Heart left ventricle (tissue), 16 donors: ENCODE measurements at regions of chr1 and their contacts with region 1.

Region 1: GRCh38 chr1:39098546-39099250 is 72.5 kb downstream of the NDUFS5 start:
- DNase-seq: peak in 4 of 5 donors; percentile 45 to 65 (median 46)
- ATAC-seq: peak; percentile 27 to 77 (median 70)
- H3K4me3 ChIP-seq: no peak overlapping the region
- H3K27ac ChIP-seq: no peak overlapping the region
- H3K4me1 ChIP-seq: peaks cover 0 to 28% (median 10%) of the 10 kb centered on the region in 12 donors
- H3K27me3 ChIP-seq: no peaks in the 10 kb centered on the region
- CTCF ChIP-seq: peak; percentile 57 to 82 (median 74)
- POLR2A ChIP-seq: no peak

Region 2: GRCh38 chr1:38873027-38873969 is 225.4 kb before region 1 on chr1 and contains the start of gene MYCBP:
- intact Hi-C with region 1: loop called in 2 of 10 experiments (anchors 10 kb)
- DNase-seq: peak; percentile 96 to 98 (median 97)
- ATAC-seq: peak; percentile 98 to 100 (median 100)
- H3K4me3 ChIP-seq: peak within 1 kb of the TSS; percentile 37 to 96 (median 80)
- H3K27ac ChIP-seq: peak within 1 kb of the TSS; percentile 53 to 80 (median 72)
- H3K4me1 ChIP-seq: peaks cover 0 to 29% (median 21%) of the 10 kb centered on the region in 12 donors
- H3K27me3 ChIP-seq: no peaks in the 10 kb centered on the region
- CTCF ChIP-seq: peak in 5 of 12 donors; percentile 17 to 45 (median 24)
- POLR2A ChIP-seq: peak in 1 of 2 donors; percentile 80
- total RNA-seq, gene MYCBP: 4.8 to 26.2 (median 11.1) TPM

Region 3: GRCh38 chr1:39189592-39190041 is 90.9 kb after region 1 on chr1:
- intact Hi-C with region 1: loop called in 4 of 10 experiments (anchors 1 to 2 kb)
- DNase-seq: no peak
- ATAC-seq: no peak
- H3K4me3 ChIP-seq: no peak overlapping the region
- H3K27ac ChIP-seq: peak overlapping the region in 1 of 12 donors; percentile 91
- H3K4me1 ChIP-seq: peaks cover 0 to 58% (median 23%) of the 10 kb centered on the region in 12 donors
- H3K27me3 ChIP-seq: no peaks in the 10 kb centered on the region
- CTCF ChIP-seq: no peak
- POLR2A ChIP-seq: no peak

Region 4: DNA sequence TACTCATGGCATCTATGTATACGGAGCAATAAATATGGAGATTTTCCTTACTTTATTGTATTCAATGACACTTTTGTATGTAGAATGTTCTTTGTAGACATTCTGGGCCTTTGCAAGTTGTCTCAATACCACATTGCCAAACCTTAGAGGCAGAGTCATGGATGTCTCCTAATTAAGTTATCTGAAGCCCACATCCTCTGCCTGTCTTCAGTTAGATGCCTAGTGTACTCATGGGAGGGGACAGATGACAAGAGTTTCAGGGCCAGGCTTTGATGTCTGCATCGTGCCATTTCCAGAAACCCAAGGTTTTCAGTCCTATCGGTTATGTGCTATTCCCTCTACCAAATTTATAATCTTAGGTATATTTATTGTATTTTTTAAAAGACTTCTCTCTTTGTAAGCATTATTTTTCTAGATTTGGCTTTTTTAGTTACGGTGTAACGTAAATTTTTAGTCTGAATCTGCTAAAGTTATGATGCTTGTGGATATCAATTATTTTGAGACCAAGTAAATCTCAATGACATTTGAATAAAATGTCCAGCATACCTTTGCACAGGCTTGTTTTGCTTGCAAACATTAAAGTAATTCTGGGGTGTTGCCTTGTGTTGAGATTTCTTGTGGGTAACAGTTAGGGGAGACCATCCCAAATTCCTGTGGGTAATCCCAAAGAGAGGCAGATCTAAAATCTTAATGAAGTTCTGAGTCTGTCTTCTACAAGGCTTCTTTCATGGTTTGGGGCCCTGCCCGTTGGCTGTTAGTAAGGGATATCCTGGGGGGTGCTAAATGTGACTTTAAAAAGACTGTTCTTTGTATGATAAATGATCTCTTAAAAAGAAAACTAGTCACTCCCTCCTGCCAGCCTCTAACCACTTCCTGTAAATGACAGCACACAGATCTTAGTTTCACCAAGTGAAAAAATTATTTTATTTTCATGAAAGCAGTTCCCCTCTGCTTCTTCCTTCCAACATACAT is 97.8 kb after region 1 on chr1:
- intact Hi-C with region 1: loop called in 4 of 10 experiments (anchors 1 to 2 kb)
- DNase-seq: no peak
- ATAC-seq: no peak
- H3K4me3 ChIP-seq: peak overlapping the region in 1 of 12 donors; percentile 15
- H3K27ac ChIP-seq: peak overlapping the region in 5 of 12 donors; percentile 21 to 91 (median 41)
- H3K4me1 ChIP-seq: peaks cover 8 to 67% (median 37%) of the 10 kb centered on the region in 12 donors
- H3K27me3 ChIP-seq: no peaks in the 10 kb centered on the region
- CTCF ChIP-seq: no peak
- POLR2A ChIP-seq: no peak

Region 5: DNA sequence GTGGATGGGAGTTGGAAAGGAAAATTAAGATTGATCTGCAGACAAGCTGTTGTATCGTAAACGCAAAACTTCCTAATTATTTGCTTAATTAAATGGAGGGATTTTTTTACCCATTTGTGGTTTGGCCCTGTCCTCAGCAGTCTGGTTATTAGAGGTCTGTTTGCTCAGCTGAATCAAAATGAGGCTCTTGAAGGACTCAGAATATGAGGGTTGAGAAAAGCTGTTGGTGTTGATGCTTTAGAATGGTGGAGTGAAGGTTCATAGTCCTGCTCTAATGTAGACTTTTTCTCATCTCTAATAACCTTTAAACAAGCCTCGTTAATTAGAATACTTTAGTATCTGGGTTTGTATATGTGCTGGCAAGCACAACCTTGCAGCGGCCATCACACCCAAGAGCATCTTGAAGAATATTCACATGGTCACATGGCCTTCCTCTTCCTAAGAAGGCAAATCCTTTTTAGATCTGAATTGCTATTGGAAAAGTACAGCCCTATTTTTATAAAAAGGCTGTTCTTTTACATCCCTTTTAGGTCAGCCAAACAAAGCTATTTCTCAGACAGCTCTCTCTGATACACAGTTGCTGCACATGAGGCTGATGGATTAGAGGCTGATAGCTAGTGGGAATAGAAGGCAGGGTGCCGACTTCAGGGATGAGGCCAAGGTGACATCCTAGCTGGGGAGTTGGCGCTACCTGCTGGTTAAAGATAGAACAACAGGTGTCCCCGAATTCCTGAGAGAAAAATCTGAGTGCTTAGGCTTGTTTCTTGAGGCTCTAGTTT is 159.6 kb after region 1 on chr1:
- intact Hi-C with region 1: loop called in 7 of 10 experiments (anchors 1 to 5 kb)
- DNase-seq: peak in 4 of 5 donors; percentile 58 to 72 (median 69)
- ATAC-seq: peak; percentile 63 to 88 (median 84)
- H3K4me3 ChIP-seq: no peak overlapping the region
- H3K27ac ChIP-seq: peak overlapping the region in 10 of 12 donors; percentile 2 to 53 (median 17)
- H3K4me1 ChIP-seq: peaks cover 0 to 39% (median 20%) of the 10 kb centered on the region in 12 donors
- H3K27me3 ChIP-seq: no peaks in the 10 kb centered on the region
- CTCF ChIP-seq: peak; percentile 77 to 94 (median 85)
- POLR2A ChIP-seq: no peak

Region 6: GRCh38 chr1:39269791-39270342 is 171.2 kb after region 1 on chr1:
- intact Hi-C with region 1: loop called in 1 of 10 experiments (anchors 5 kb)
- DNase-seq: no peak
- ATAC-seq: peak in 2 of 4 donors; percentile 14 to 22
- H3K4me3 ChIP-seq: peak overlapping the region in 3 of 12 donors; percentile 6 to 45 (median 22)
- H3K27ac ChIP-seq: peak overlapping the region in 6 of 12 donors; percentile 21 to 84 (median 66)
- H3K4me1 ChIP-seq: peaks cover 7 to 85% (median 69%) of the 10 kb centered on the region in 12 donors
- H3K27me3 ChIP-seq: no peaks in the 10 kb centered on the region
- CTCF ChIP-seq: no peak
- POLR2A ChIP-seq: no peak

Region 7: DNA sequence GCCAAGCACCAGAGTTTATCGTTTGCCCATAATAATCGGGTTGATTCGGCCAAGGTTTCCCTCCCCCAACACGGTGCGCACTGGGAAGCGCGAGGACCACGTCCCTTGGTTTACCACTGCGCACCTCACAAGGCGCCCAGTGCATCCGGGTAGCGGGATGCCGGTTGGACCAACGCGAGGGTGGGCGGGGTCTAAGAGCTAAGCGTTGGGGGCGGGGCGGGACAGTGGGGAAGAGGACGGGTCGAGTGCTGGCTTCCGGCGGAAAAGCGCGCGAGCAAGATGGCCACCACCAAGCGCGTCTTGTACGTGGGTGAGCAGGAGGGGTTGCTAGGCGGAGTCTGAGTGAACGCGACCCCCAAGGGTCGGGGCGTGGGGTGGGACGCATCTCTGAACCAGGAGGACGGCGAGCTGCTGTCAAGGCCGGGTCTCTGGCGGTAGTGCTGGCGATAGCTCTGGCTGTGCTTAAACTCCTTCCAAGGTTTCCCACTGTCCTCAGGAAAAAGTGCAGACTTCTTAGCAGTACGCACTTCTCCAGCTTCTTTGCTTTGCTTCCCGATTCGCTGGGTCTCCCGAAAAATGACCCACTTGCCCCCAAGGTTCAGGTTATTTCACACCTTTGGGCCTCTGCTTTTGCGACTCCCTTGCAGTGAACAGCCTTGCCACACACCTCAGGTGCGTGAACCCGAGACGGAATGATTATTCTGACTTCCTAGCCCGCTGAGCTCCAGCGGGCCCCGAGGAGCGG is 640.1 kb after region 1 on chr1 and contains the start of gene PPIE:
- intact Hi-C with region 1: loop called in 1 of 10 experiments (anchors 10 kb)
- DNase-seq: peak; percentile 94 to 97 (median 95)
- ATAC-seq: peak; percentile 96 to 99 (median 99)
- H3K4me3 ChIP-seq: peak within 1 kb of the TSS; percentile 57 to 91 (median 78)
- H3K27ac ChIP-seq: peak within 1 kb of the TSS in 11 of 12 donors; percentile 7 to 84 (median 72)
- H3K4me1 ChIP-seq: peaks cover 0 to 17% (median 14%) of the 10 kb centered on the region in 12 donors
- H3K27me3 ChIP-seq: peaks cover 0 to 16% (median 2%) of the 10 kb centered on the region in 9 donors
- CTCF ChIP-seq: no peak
- POLR2A ChIP-seq: peak in 1 of 2 donors; percentile 17
- total RNA-seq, gene PPIE: 22.2 to 33.3 (median 27.9) TPM